ENCODE measurements at regions of chr7 and their contacts with region 1.

Region 1: GRCh38 chr7:77759294-77759889 is 38.8 kb downstream of the TMEM60 start:
- DNase-seq: peak; percentile 76
- H3K4me3 ChIP-seq: no peak overlapping the region
- H3K27ac ChIP-seq: peak overlapping the region; percentile 75
- H3K4me1 ChIP-seq: peaks cover 64% of the 10 kb centered on the region
- CTCF ChIP-seq: peak; percentile 98

Region 2: GRCh38 chr7:77542409-77542808 is 217.0 kb before region 1 on chr7:
- CTCF ChIA-PET with region 1: no interaction called
- POLR2A ChIA-PET with region 1: no interaction called
- intact Hi-C with region 1: no loop called
- DNase-seq: no peak
- H3K4me3 ChIP-seq: no peak overlapping the region
- H3K27ac ChIP-seq: no peak overlapping the region
- H3K4me1 ChIP-seq: peaks cover 4% of the 10 kb centered on the region
- CTCF ChIP-seq: no peak

Region 3: DNA sequence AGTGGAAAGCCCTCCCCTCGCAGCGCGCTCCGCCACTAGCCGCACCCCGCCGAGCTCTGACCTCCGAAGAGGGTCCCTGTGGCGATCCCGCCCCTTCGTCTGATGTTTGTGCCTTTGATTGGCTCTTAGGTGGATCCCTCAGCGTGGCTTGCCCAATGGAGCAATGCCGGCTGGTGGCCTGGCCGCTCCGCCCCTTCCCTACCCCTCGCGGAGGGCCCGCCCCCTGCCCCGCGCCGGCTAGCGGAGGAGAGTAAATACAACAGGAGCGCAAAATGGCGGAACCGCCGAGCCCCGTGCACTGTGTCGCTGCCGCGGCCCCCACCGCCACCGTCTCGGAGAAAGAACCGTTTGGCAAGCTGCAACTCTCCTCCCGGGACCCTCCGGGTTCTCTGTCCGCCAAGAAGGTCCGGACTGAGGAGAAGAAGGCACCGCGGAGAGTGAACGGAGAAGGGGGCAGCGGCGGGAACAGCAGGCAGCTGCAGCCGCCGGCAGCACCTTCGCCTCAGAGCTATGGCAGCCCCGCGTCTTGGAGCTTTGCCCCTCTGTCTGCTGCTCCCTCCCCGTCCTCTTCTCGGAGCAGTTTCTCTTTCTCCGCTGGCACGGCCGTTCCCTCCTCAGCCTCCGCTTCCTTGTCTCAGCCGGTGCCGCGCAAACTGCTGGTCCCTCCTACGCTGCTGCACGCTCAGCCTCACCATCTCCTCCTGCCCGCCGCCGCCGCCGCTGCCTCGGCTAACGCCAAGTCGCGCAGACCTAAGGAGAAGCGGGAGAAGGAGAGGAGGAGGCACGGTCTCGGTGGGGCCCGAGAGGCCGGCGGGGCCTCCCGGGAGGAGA is 63.0 kb before region 1 on chr7 and contains the start of gene RSBN1L:
- CTCF ChIA-PET with region 1: no interaction called
- POLR2A ChIA-PET with region 1: interaction called, 8 read pairs
- intact Hi-C with region 1: loop called (anchors 2 kb)
- DNase-seq: peak; percentile 98
- H3K4me3 ChIP-seq: peak within 1 kb of the TSS; percentile 99
- H3K27ac ChIP-seq: peak within 1 kb of the TSS; percentile 85
- H3K4me1 ChIP-seq: peaks cover 29% of the 10 kb centered on the region
- CTCF ChIP-seq: 0 out of 2 replicates have a peak, but pooled peaks have one; percentile 31
- total RNA-seq, gene RSBN1L: 23.3 and 27.4 TPM in 2 replicates

Region 4: GRCh38 chr7:77940647-77941046 is 181.3 kb after region 1 on chr7:
- CTCF ChIA-PET with region 1: no interaction called
- POLR2A ChIA-PET with region 1: interaction called, 3 read pairs
- intact Hi-C with region 1: loop called (anchors 2 kb)
- DNase-seq: peak; percentile 38
- H3K4me3 ChIP-seq: no peak overlapping the region
- H3K27ac ChIP-seq: no peak overlapping the region
- H3K4me1 ChIP-seq: peaks cover 29% of the 10 kb centered on the region
- CTCF ChIP-seq: peak; percentile 96

Region 5: GRCh38 chr7:78039790-78040776 is 280.7 kb after region 1 on chr7:
- CTCF ChIA-PET with region 1: no interaction called
- POLR2A ChIA-PET with region 1: no interaction called
- intact Hi-C with region 1: loop called (anchors 10 kb)
- DNase-seq: peak; percentile 50
- H3K4me3 ChIP-seq: no peak overlapping the region
- H3K27ac ChIP-seq: no peak overlapping the region
- H3K4me1 ChIP-seq: no peaks in the 10 kb centered on the region
- CTCF ChIP-seq: peak; percentile 87

Measured in OCI-LY7 (cell line).